H1 (cell line): ENCODE measurements at regions of chr3 and their contacts with region 1.

Region 1: GRCh38 chr3:72847751-72848702 is at the start of gene SHQ1:
- DNase-seq: peak; percentile 57 to 93
- H3K4me3 ChIP-seq: peak within 1 kb of the TSS; percentile 67 to 82 (median 77)
- H3K27ac ChIP-seq: no peak within 1 kb of the TSS
- H3K4me1 ChIP-seq: peaks cover 0 to 6% (median 0%) of the 10 kb centered on the region in 4 experiments; a peak in 3 of 7 replicates
- H3K27me3 ChIP-seq: peaks cover 0 to 17% (median 11%) of the 10 kb centered on the region in 4 experiments; a peak in 6 of 7 replicates
- CTCF ChIP-seq: no peak
- EP300 ChIP-seq: no peak
- POLR2A ChIP-seq: no peak
- RAD21 ChIP-seq: no peak
- total RNA-seq, gene SHQ1: 33.7 and 34.4 TPM in 2 replicates

Region 2: DNA sequence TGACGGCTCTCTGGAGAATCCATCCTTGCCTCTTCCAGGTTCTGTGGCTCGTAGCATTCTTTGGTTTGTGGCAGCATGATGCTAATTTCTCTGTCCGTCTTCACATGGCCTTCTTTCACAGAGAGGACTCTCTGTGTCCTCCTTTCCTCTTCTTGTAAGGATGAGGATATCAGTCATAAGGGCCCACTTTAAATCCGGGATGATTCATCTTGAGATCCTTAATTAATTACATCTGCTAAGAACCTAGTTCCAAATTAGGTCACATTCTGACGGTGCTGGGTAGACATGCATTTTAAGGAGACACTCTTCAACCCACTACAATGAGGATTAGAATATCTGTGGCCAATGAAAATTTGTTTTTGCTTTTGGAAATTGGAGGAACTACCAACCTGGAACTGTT is 24.2 kb after region 1 on chr3:
- CTCF ChIA-PET with region 1: interaction called, 17 read pairs
- POLR2A ChIA-PET with region 1: no interaction called
- DNase-seq: no peak
- H3K4me3 ChIP-seq: no peak overlapping the region
- H3K27ac ChIP-seq: no peak overlapping the region
- H3K4me1 ChIP-seq: no peaks in the 10 kb centered on the region
- H3K27me3 ChIP-seq: no peaks in the 10 kb centered on the region; a peak in 1 of 7 replicates
- CTCF ChIP-seq: no peak
- EP300 ChIP-seq: no peak
- POLR2A ChIP-seq: no peak
- RAD21 ChIP-seq: no peak

Region 3: GRCh38 chr3:72891053-72891855 is 43.2 kb after region 1 on chr3:
- CTCF ChIA-PET with region 1: interaction called, 12 read pairs
- POLR2A ChIA-PET with region 1: no interaction called
- DNase-seq: no peak
- H3K4me3 ChIP-seq: no peak overlapping the region
- H3K27ac ChIP-seq: no peak overlapping the region
- H3K4me1 ChIP-seq: peaks cover 2 to 8% (median 6%) of the 10 kb centered on the region in 4 experiments; a peak in 6 of 7 replicates
- H3K27me3 ChIP-seq: peaks cover 0 to 37% (median 18%) of the 10 kb centered on the region in 4 experiments; a peak in 5 of 7 replicates
- CTCF ChIP-seq: no peak
- EP300 ChIP-seq: no peak
- POLR2A ChIP-seq: no peak
- RAD21 ChIP-seq: no peak; a peak in 1 of 4 replicates

Region 4: GRCh38 chr3:73086071-73086494 is 238.1 kb after region 1 on chr3:
- CTCF ChIA-PET with region 1: interaction called, 44 read pairs
- POLR2A ChIA-PET with region 1: interaction called, 3 read pairs
- DNase-seq: peak in 1 of 2 experiments; percentile 68
- H3K4me3 ChIP-seq: no peak overlapping the region
- H3K27ac ChIP-seq: no peak overlapping the region
- H3K4me1 ChIP-seq: no peaks in the 10 kb centered on the region
- H3K27me3 ChIP-seq: no peaks in the 10 kb centered on the region
- CTCF ChIP-seq: peak; percentile 51 to 83 (median 63)
- EP300 ChIP-seq: no peak
- POLR2A ChIP-seq: no peak
- RAD21 ChIP-seq: peak; percentile 96